ENCODE measurements at regions of chr1 and their contacts with region 1.

Region 1: DNA sequence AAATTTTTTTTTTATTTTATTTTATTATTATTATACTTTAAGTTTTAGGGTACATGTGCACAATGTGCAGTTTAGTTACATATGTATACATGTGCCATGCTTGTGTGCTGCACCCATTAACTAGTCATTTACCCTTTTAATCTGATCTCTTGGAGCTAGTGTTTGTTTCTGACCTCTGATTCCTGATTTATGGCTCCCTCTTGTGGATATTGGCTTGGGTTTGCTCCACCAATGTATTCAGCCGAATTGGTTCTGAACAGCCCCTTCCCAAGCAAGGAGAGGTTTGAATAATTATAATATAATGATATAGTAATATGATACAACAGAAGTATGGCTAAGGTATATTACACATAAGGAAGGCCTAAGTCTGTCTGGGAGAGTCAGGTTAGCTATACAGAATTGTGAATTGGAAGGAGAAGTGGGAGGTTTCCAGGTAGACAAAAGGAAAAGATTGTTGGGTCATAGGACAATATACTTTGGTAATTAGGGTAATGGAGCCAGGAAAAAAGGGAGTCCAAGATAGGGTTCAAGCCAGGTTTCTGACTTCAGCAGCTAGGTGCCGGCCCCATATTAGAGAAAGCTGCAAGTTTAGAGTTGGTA is 53.1 kb upstream of the HMCN1 start:
- DNase-seq: peak; percentile 80
- H3K4me3 Mint-ChIP-seq: no peak overlapping the region
- H3K27ac Mint-ChIP-seq: no peak overlapping the region
- H3K4me1 Mint-ChIP-seq: peaks cover 18% of the 10 kb centered on the region
- H3K27me3 Mint-ChIP-seq: peaks cover 3% of the 10 kb centered on the region

Region 2: GRCh38 chr1:184945029-184945428 is 736.1 kb before region 1 on chr1:
- intact Hi-C with region 1: no loop called
- DNase-seq: no peak
- H3K4me3 Mint-ChIP-seq: no peak overlapping the region
- H3K27ac Mint-ChIP-seq: no peak overlapping the region
- H3K4me1 Mint-ChIP-seq: peaks cover 16% of the 10 kb centered on the region
- H3K27me3 Mint-ChIP-seq: no peaks in the 10 kb centered on the region

Region 3: GRCh38 chr1:185044981-185045813 is 635.9 kb before region 1 on chr1 and contains the start of gene RNF2:
- intact Hi-C with region 1: loop called (anchors 10 kb)
- DNase-seq: peak; percentile 91
- H3K4me3 Mint-ChIP-seq: peak within 1 kb of the TSS; percentile 93
- H3K27ac Mint-ChIP-seq: peak within 1 kb of the TSS; percentile 91
- H3K4me1 Mint-ChIP-seq: peaks cover 26% of the 10 kb centered on the region
- H3K27me3 Mint-ChIP-seq: peaks cover 18% of the 10 kb centered on the region
- total RNA-seq, gene RNF2: 17.8 and 21.1 TPM in 2 replicates

Region 4: DNA sequence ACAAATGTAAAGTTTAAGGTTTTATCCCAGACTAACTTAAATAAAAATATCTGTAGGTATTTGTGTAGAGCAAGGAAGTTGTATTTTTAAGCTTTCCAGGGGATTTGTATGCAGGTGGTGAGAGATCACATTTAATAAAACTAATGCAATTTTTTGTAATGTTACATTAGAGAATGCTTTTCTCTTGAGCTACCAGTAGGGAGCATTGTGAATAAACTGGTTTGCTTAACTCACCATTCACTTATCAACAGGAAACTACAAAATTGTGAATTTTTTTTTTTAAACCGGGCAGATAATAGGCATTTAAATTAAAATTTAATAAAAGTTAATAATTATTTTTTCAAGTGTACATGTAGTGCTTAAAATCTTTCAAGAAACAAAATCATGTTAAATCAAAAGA is 442.7 kb before region 1 on chr1:
- intact Hi-C with region 1: loop called (anchors 2 kb)
- DNase-seq: no peak
- H3K4me3 Mint-ChIP-seq: no peak overlapping the region
- H3K27ac Mint-ChIP-seq: no peak overlapping the region
- H3K4me1 Mint-ChIP-seq: peaks cover 12% of the 10 kb centered on the region
- H3K27me3 Mint-ChIP-seq: no peaks in the 10 kb centered on the region